K562 (cell line): ENCODE measurements at regions of chrX and their contacts with region 1.

Region 1: GRCh38 chrX:150513544-150513943 is 54.9 kb upstream of the MTM1 start:
- DNase-seq: peak in 1 of 4 experiments; percentile 10
- ATAC-seq: peak; percentile 83
- H3K4me3 ChIP-seq: no peak overlapping the region
- H3K27ac ChIP-seq: no peak overlapping the region
- H3K4me1 ChIP-seq: no peaks in the 10 kb centered on the region; a peak in 1 of 5 replicates
- H3K27me3 ChIP-seq: peaks cover 3 to 58% of the 10 kb centered on the region in 2 experiments; a peak in 4 of 5 replicates
- CTCF ChIP-seq: peak in 2 of 3 experiments; percentile 12 to 38; a peak in 3 of 6 replicates
- EP300 ChIP-seq: no peak
- POLR2A ChIP-seq: no peak
- RAD21 ChIP-seq: peak in 1 of 2 experiments; percentile 27; a peak in 2 of 4 replicates

Region 2: DNA sequence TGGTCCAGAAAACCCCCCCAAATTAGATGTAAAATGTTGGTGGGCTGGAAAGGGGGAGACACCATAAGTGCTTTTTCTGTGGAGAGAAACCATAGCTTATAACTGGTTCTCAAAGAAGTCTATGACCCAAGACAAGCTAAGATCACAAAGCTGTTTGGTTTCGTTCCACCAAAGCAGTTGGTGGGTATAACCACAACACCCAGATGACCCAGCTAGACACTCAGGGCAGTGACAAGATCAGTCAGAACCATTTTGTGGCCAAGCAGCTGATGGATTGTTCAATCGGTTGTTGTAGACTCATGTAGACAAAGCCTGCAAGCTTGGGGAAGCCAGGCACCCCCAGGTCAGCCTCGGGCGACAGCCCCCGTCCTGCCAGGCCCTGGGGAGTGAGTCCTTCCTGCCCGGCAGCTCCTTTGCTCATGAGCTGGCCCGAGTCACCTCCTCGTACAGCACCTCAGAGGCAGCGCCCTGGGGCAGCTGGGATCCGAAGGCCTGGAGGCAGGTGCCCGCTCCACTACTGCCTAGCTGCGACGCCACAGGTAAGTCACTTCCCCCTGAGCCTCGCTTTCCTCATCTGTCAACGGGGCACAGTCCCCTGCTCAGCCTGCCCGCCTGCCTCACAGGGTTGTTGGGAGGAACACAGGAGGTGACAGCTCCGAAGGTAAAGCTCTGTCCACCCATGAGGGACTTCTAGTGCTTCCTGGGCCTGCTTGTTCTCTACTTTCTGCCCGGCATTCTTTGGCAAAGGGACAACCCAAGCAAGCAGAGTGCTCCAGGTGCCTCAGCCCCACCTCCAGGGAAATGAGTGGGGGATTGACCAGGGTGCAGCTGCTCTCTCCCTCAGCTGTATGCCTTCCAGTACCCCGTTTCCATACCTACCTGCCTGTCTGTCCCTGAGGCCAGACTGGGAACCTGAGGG is 10.3 kb before region 1 on chrX:
- CTCF ChIA-PET with region 1: no interaction called
- POLR2A ChIA-PET with region 1: interaction called, 10 read pairs
- in situ Hi-C with region 1: no loop called
- intact Hi-C with region 1: no loop called
- DNase-seq: no peak
- ATAC-seq: no peak
- H3K4me3 ChIP-seq: no peak overlapping the region
- H3K27ac ChIP-seq: no peak overlapping the region
- H3K4me1 ChIP-seq: peaks cover 0 to 5% of the 10 kb centered on the region in 2 experiments; a peak in 2 of 5 replicates
- H3K27me3 ChIP-seq: peaks cover 3 to 39% of the 10 kb centered on the region in 2 experiments
- CTCF ChIP-seq: no peak
- EP300 ChIP-seq: no peak
- POLR2A ChIP-seq: no peak
- RAD21 ChIP-seq: no peak